ENCODE measurements at regions of chr11 and their contacts with region 1.

Region 1: GRCh38 chr11:61384271-61385242 is 7.8 kb upstream of the TMEM216 start:
- DNase-seq: no peak
- H3K4me3 ChIP-seq: no peak overlapping the region
- H3K27ac ChIP-seq: no peak overlapping the region
- H3K4me1 ChIP-seq: no peaks in the 10 kb centered on the region; a peak in 1 of 4 replicates
- H3K27me3 ChIP-seq: no peaks in the 10 kb centered on the region
- CTCF ChIP-seq: no peak
- EP300 ChIP-seq: no peak
- RAD21 ChIP-seq: peak; percentile 34

Region 2: GRCh38 chr11:61294717-61295595 is 89.6 kb before region 1 on chr11 and contains the start of gene VWCE:
- CTCF ChIA-PET with region 1: interaction called, 12 read pairs
- POLR2A ChIA-PET with region 1: no interaction called
- DNase-seq: peak; percentile 89
- H3K4me3 ChIP-seq: peak within 1 kb of the TSS; percentile 55 to 69
- H3K27ac ChIP-seq: peak within 1 kb of the TSS in 1 of 2 experiments; percentile 58; a peak in 2 of 4 replicates
- H3K4me1 ChIP-seq: peaks cover 16 to 23% of the 10 kb centered on the region in 2 experiments; a peak in 2 of 4 replicates
- H3K27me3 ChIP-seq: no peaks in the 10 kb centered on the region
- CTCF ChIP-seq: peak; percentile 36
- EP300 ChIP-seq: no peak
- RAD21 ChIP-seq: peak; percentile 23; the same call in 1 of the 2 replicates
- polyA plus RNA-seq, gene VWCE: 3.4 and 5.0 TPM in 2 replicates

Region 3: DNA sequence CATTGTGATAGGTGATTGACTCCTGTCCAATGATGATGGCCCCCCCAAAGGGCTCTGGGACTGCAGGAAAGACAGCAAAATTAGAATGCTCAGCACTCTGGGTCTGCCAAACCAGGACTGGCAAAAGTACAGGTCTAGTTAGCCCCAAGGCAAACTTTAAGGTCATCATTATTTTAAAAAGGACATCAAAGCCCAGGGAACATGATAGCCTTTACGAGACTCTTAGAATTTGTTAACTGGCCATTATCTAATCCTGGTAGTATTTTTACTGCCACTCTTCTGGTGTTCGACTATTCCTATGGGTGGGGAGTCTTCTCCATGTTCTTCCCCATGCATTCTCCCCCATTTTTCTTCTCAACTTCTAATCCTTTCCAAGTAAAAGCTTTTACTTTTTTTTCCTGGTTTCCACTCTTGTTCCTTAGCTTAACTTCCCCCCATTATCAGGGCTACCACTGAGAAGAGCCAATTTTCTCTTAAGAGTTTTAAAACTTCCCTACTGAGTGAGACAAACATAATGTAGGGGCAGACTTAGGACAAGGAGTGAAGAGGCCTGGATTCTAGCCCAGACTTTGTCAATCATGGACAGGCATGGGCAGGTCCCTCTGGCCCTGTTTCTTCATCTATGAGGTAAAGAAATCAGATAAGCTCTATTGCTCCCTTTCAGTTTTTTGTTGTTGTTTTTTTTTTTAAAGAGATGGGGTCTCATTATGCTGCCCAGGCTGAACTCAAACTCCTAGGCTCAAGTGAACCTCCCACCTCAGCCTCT is 58.7 kb before region 1 on chr11:
- CTCF ChIA-PET with region 1: interaction called, 23 read pairs
- POLR2A ChIA-PET with region 1: no interaction called
- DNase-seq: no peak
- H3K4me3 ChIP-seq: no peak overlapping the region
- H3K27ac ChIP-seq: no peak overlapping the region
- H3K4me1 ChIP-seq: peaks cover 0 to 10% of the 10 kb centered on the region in 2 experiments; a peak in 2 of 4 replicates
- H3K27me3 ChIP-seq: no peaks in the 10 kb centered on the region
- CTCF ChIP-seq: no peak
- EP300 ChIP-seq: no peak
- RAD21 ChIP-seq: no peak

Region 4: GRCh38 chr11:61342207-61342803 is 42.3 kb before region 1 on chr11:
- CTCF ChIA-PET with region 1: interaction called, 300 read pairs
- POLR2A ChIA-PET with region 1: interaction called, 18 read pairs
- DNase-seq: no peak
- H3K4me3 ChIP-seq: no peak overlapping the region
- H3K27ac ChIP-seq: no peak overlapping the region
- H3K4me1 ChIP-seq: peaks cover 0 to 26% of the 10 kb centered on the region in 2 experiments; a peak in 1 of 4 replicates
- H3K27me3 ChIP-seq: no peaks in the 10 kb centered on the region
- CTCF ChIP-seq: no peak
- EP300 ChIP-seq: no peak
- RAD21 ChIP-seq: no peak

Region 5: DNA sequence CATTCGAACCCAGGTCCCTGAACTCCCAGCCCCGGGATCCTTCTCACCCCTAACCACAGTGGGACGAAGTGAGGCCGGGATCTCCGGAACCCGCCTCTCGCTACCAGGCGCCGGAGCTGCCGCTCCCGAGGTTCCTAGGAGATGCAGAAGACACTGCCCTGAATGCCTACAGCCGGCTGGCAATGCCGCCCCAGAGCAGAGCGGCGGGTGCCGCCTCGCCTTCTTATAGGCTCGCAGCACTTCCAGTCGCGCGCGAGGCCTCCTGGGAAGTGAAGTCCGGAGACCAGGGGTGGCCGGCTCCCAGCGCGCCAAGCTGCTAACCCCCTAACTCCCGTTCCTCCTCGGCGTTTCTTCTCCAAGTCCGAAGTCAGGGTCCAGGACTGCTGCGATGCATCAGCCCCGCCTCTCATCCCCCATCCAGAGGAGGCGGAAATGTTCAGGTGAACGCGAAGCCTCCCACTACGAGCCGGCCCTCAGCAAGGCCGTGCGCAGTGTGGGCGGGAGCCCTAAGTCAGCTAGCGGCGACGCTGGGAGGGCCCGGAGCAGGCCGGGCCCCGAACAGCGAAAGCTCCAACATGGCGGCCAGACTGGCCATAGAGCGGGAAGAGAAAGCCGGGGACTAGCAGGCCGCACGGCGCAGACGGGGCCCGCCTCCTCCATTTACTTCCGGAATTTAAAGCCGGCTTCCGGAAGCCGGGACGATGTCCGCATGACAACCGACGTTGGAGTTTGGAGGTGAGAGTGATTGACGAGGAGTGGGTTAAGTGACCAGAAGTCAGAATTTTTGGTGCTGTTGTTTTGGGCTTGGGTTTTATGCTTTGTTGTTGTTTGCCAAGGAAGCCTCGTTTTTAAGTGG is 22.6 kb before region 1 on chr11 and contains the starts of genes CYB561A3 and TMEM138:
- CTCF ChIA-PET with region 1: interaction called, 101 read pairs
- POLR2A ChIA-PET with region 1: interaction called, 15 read pairs
- DNase-seq: peak; percentile 93
- H3K4me3 ChIP-seq: peak within 1 kb of the TSS; percentile 68 to 71
- H3K27ac ChIP-seq: peak within 1 kb of the TSS; percentile 98 to 99
- H3K4me1 ChIP-seq: peaks cover 9 to 14% of the 10 kb centered on the region in 2 experiments; a peak in 3 of 4 replicates
- H3K27me3 ChIP-seq: no peaks in the 10 kb centered on the region
- CTCF ChIP-seq: no peak
- EP300 ChIP-seq: no peak
- RAD21 ChIP-seq: no peak
- polyA plus RNA-seq, gene CYB561A3: 70.0 and 76.4 TPM in 2 replicates
- polyA plus RNA-seq, gene TMEM138: 82.2 and 129 TPM in 2 replicates

Region 6: GRCh38 chr11:61495801-61496597 is 111.4 kb after region 1 on chr11:
- CTCF ChIA-PET with region 1: no interaction called
- POLR2A ChIA-PET with region 1: no interaction called
- DNase-seq: peak; percentile 65
- H3K4me3 ChIP-seq: no peak overlapping the region
- H3K27ac ChIP-seq: no peak overlapping the region
- H3K4me1 ChIP-seq: peaks cover 0 to 12% of the 10 kb centered on the region in 2 experiments; a peak in 1 of 4 replicates
- H3K27me3 ChIP-seq: no peaks in the 10 kb centered on the region
- CTCF ChIP-seq: no peak
- EP300 ChIP-seq: no peak
- RAD21 ChIP-seq: no peak

Measured in SK-N-SH (cell line).